ENCODE measurements at regions of chr9 and their contacts with region 1.

Region 1: GRCh38 chr9:98412101-98412842 is 156.8 kb upstream of the TBC1D2 start:
- DNase-seq: no peak
- H3K4me3 ChIP-seq: no peak overlapping the region
- H3K27ac ChIP-seq: no peak overlapping the region
- H3K4me1 ChIP-seq: peaks cover 0 to 7% (median 4%) of the 10 kb centered on the region in 4 experiments; a peak in 5 of 7 replicates
- H3K27me3 ChIP-seq: no peaks in the 10 kb centered on the region
- CTCF ChIP-seq: no peak
- EP300 ChIP-seq: no peak
- POLR2A ChIP-seq: no peak
- RAD21 ChIP-seq: no peak

Region 2: DNA sequence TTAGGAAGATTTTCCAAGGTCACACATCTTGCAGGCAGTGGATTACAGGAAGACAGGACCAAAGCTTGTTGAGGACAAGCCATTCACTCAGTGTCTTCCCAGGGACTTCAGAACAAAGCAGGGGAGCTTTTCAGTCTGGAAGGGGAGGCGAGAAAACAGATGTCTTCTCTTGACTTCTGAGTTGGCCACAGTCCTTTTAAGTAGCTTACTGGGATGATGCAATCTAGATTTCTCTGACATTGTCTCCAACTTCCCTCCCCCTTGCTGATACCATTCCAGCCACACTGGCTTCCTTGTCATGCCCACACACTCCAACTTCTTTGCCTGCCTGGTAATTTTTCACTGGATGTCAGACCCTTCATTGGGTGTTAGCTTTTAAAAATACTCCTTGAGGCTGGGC is 17.3 kb after region 1 on chr9:
- CTCF ChIA-PET with region 1: interaction called, 13 read pairs
- POLR2A ChIA-PET with region 1: no interaction called
- DNase-seq: no peak
- H3K4me3 ChIP-seq: no peak overlapping the region
- H3K27ac ChIP-seq: no peak overlapping the region
- H3K4me1 ChIP-seq: no peaks in the 10 kb centered on the region
- H3K27me3 ChIP-seq: no peaks in the 10 kb centered on the region
- CTCF ChIP-seq: no peak
- EP300 ChIP-seq: no peak
- POLR2A ChIP-seq: no peak
- RAD21 ChIP-seq: no peak

Region 3: GRCh38 chr9:98438666-98439065 is 26.4 kb after region 1 on chr9:
- CTCF ChIA-PET with region 1: interaction called, 29 read pairs
- POLR2A ChIA-PET with region 1: no interaction called
- DNase-seq: no peak
- H3K4me3 ChIP-seq: no peak overlapping the region
- H3K27ac ChIP-seq: no peak overlapping the region
- H3K4me1 ChIP-seq: no peaks in the 10 kb centered on the region
- H3K27me3 ChIP-seq: no peaks in the 10 kb centered on the region
- CTCF ChIP-seq: no peak
- EP300 ChIP-seq: no peak
- POLR2A ChIP-seq: no peak
- RAD21 ChIP-seq: no peak

Region 4: DNA sequence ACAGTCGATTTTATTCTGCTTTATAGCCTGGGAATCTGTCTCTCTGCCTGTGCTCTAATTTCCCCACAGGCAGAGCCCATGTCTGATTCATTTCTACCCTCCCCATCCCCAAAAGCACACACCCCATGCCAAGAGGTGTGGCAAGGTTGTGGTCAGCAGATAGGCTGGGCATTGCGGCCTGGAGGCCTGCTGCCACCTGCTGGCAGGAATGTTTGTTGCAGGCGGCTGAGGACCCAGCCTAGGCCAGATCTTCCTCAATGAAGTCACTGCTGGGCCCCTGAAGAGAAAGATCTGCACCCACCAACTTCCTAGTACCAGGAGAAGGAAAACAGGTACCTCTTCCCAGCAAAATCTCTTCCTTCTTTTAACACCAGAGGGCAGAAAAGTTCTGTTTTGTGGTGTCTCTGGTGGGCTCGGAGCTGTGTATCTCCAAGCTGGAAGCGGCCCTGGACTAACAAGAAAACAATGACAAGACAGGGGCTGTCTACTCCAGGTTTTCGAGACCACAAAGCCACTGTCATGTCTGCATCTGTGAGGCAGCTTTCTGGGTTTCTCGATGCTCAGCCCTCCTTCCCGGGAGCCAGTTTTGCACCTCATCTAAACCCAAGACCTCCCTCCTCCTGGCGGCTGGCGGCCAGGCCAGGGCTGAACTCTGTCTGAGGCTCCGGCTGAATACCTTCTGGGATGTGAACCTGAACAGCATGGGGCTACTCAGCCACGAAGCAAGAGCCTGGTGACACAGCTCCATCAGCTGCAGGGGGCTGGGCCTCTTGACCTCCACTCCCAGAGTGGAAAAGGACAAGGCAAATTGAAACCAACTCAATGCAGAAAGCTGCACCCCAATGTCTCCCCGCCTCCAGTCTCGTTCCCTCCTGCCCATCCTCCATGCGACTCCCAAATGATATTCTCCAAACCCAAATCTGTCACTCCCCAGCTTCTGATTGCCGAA is 379.1 kb after region 1 on chr9:
- CTCF ChIA-PET with region 1: no interaction called
- POLR2A ChIA-PET with region 1: no interaction called
- DNase-seq: peak; percentile 80 to 93
- H3K4me3 ChIP-seq: no peak overlapping the region
- H3K27ac ChIP-seq: peak overlapping the region; percentile 14; the same call in 1 of the 2 replicates
- H3K4me1 ChIP-seq: peaks cover 5 to 18% (median 8%) of the 10 kb centered on the region in 4 experiments
- H3K27me3 ChIP-seq: no peaks in the 10 kb centered on the region
- CTCF ChIP-seq: peak; percentile 80 to 98 (median 96)
- EP300 ChIP-seq: no peak; a peak in 1 of 3 replicates
- POLR2A ChIP-seq: no peak
- RAD21 ChIP-seq: peak; percentile 34 to 53